ENCODE measurements at regions of chr9 and their contacts with region 1.

Region 1: GRCh38 chr9:111271481-111272080 is 58.4 kb downstream of the OR2K2 start:
- DNase-seq: no peak

Region 2: GRCh38 chr9:111330124-111330523 is 58.5 kb after region 1 on chr9 and contains the start of gene OR2K2:
- intact Hi-C with region 1: loop called (anchors 10 kb)
- DNase-seq: no peak
- total RNA-seq, gene OR2K2: not detected

Measured in cardiac septum (tissue), 1 donor.